Colonic mucosa (tissue), 4 donors: ENCODE measurements at regions of chr10 and their contacts with region 1.

Region 1: DNA sequence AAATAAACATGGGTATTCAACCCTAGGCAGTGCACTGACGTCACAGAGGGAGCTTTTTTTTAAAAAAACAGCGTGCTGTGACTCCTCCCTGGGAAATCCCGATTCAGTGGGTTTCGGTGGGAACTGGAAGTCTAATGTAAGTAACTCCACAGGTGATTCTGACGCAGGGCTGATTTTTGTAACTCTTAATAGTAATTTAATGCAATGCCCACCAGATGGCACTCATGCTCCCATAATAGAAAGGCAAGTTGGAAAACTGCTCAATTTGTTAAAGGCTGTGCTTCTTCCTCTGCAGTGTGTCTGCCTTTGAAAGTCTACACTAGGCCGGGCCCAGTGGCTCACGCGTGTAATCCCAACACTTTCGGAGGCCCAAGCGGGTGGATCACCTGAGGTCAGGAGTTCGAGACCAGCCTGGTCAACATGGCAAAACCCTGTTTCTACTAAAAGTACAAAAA is 10.9 kb upstream of the RSU1 start:
- DNase-seq: peak; percentile 72
- H3K4me3 ChIP-seq: no peak overlapping the region
- H3K27ac ChIP-seq: no peak overlapping the region
- H3K4me1 ChIP-seq: peaks cover 6% of the 10 kb centered on the region
- H3K27me3 ChIP-seq: no peaks in the 10 kb centered on the region
- CTCF ChIP-seq: peak; percentile 40

Region 2: DNA sequence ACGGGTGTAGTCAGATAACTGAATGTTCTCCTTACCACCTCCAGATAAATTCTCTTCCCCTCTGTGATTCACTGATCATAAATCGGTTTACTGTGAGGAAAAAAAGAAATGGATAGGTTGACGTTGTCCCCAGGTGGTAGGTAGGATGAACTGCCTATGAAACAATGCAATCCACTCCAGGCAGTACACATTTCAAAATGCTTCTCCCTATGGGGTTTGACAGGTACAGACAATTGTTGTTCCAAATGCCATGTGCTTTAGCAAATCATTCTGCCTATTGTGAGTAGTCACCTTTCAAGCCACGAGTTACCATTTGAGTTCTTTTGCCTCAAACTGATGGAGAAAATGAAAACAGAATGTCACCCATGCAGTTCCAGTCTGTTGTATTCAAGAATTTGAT is 421.7 kb after region 1 on chr10:
- intact Hi-C with region 1: loop called (anchors 5 kb)
- DNase-seq: no peak
- H3K4me3 ChIP-seq: no peak overlapping the region
- H3K27ac ChIP-seq: no peak overlapping the region
- H3K4me1 ChIP-seq: no peaks in the 10 kb centered on the region
- H3K27me3 ChIP-seq: no peaks in the 10 kb centered on the region
- CTCF ChIP-seq: no peak